ENCODE measurements at regions of chr1 and their contacts with region 1.

Region 1: GRCh38 chr1:247487057-247487456 is 29.2 kb upstream of the OR2B11 start:
- DNase-seq: no peak
- ATAC-seq: peak; percentile 63
- H3K4me3 ChIP-seq: no peak overlapping the region
- H3K27ac ChIP-seq: no peak overlapping the region
- H3K4me1 ChIP-seq: no peaks in the 10 kb centered on the region
- H3K27me3 ChIP-seq: no peaks in the 10 kb centered on the region

Region 2: DNA sequence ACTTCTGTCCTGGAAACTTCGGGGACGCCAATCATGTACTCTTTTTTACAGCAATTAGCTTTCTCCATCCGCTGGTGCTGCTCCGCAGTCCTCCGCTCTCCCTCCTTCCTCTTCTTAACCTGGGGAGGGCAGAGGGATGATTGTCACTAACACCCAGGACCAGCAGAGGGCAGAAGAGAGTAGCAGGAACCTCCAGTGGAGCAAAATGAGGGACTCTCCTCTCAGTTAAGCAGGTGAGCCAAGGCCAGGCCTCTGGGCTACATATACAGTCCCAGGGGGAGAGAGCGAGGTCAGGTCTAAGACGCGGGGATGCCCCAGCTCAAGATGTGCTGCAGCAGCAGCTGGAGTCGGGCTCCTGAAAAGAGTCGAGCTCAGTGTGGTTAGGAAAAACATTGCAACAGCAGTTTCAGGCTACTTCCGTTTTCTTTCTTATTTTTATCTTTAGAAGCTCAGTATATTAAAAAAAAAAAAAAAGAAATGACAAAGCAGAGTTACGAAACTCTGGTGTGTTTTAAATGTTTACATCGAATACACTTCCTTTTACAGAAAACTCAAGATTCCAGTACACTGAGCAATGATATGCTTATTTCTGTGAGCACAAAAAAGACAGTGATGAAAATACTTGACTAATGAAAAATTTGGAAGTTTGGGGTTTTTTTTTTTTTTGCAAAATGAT is 96.8 kb before region 1 on chr1:
- intact Hi-C with region 1: loop called (anchors 2 kb)
- DNase-seq: peak; percentile 85
- ATAC-seq: peak; percentile 90
- H3K4me3 ChIP-seq: peak overlapping the region in 1 of 2 donors; percentile 34
- H3K27ac ChIP-seq: no peak overlapping the region
- H3K4me1 ChIP-seq: no peaks in the 10 kb centered on the region
- H3K27me3 ChIP-seq: no peaks in the 10 kb centered on the region

Region 3: GRCh38 chr1:247518613-247518891 is 31.5 kb after region 1 on chr1:
- intact Hi-C with region 1: no loop called
- DNase-seq: no peak
- ATAC-seq: no peak
- H3K4me3 ChIP-seq: no peak overlapping the region
- H3K27ac ChIP-seq: no peak overlapping the region
- H3K4me1 ChIP-seq: no peaks in the 10 kb centered on the region
- H3K27me3 ChIP-seq: no peaks in the 10 kb centered on the region

Region 4: DNA sequence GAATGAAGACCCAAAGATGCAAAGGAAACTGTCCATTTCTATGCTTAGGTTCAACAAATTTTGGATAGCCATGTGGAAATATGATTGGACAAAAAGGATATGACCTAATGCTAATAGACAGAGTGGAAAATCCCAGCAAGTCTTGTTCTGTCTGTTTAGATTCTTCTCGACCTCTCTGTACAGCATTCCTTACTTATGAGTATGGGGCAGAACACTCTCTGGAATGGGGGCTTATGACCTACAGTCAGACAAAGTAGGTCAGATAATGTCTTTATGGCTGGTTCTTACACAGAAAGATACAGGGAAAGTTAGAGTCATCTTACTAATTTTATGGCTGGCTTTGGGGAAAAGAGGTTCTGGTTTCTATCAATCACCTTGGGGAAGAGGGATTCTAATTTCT is 64.7 kb after region 1 on chr1:
- intact Hi-C with region 1: no loop called
- DNase-seq: no peak
- ATAC-seq: no peak
- H3K4me3 ChIP-seq: no peak overlapping the region
- H3K27ac ChIP-seq: no peak overlapping the region
- H3K4me1 ChIP-seq: no peaks in the 10 kb centered on the region
- H3K27me3 ChIP-seq: no peaks in the 10 kb centered on the region

Measured in aorta (tissue), 5 donors.